ENCODE measurements at regions of chr1 and their contacts with region 1.

Region 1: GRCh38 chr1:47333922-47334764 is 553 bp downstream of the CMPK1 start:
- DNase-seq: peak; percentile 66 to 78 (median 70)
- H3K4me3 ChIP-seq: peak overlapping the region; percentile 86 to 95 (median 93)
- H3K4me3 Mint-ChIP-seq: peak overlapping the region; percentile 95
- H3K27ac ChIP-seq: peak overlapping the region; percentile 93 to 97
- H3K27ac Mint-ChIP-seq: peak overlapping the region in 6 of 7 donors; percentile 96 to 97 (median 96)
- H3K4me1 ChIP-seq: peaks cover 20 to 28% of the 10 kb centered on the region in 2 donors
- H3K4me1 Mint-ChIP-seq: peaks cover 12% of the 10 kb centered on the region
- H3K27me3 ChIP-seq: no peaks in the 10 kb centered on the region
- H3K27me3 Mint-ChIP-seq: no peaks in the 10 kb centered on the region
- CTCF ChIP-seq: no peak

Region 2: DNA sequence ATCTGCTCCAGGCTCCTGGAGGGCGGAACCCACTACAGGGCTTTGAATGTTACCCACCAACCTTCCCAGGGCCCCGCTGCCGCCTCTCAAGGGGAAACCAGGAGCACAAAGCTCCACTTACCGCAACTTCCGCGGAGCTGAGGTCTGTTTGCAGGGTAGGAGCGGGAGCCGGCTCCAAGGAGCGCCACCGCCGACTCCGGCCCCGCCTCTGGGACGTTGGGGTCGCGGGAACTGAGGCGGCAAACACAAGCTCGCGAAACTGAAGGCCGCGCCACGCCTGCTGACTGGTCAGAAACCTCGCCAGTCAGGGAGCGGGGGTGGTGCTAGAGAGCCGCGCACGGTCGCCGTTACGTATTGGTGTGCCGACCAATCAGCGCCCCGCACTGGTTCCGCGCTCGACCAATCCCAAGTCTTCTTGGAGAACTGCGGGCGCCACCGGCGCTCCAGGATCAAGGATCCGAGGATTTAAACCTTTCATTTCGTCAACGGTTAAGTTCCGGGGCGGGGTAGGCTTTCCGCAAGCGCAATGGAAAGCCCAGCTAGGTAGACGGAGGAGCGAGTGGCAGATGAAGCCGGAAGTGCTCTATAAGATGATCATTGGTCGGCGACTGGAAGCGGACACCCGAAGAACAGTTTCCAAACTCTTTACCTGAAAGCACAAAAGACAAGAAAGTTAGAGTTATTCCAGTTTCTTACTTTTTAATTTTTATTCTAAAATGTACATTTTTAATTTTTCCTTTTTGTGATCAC is 20.1 kb before region 1 on chr1 and contains the start of gene STIL:
- intact Hi-C with region 1: loop called in 1 of 2 experiments (anchors 2 kb)
- DNase-seq: peak; percentile 97 to 99 (median 99)
- H3K4me3 ChIP-seq: peak within 1 kb of the TSS; percentile 65 to 100 (median 90)
- H3K4me3 Mint-ChIP-seq: peak within 1 kb of the TSS; percentile 96 to 98
- H3K27ac ChIP-seq: peak within 1 kb of the TSS; percentile 68 to 86
- H3K27ac Mint-ChIP-seq: peak within 1 kb of the TSS; percentile 95 to 98 (median 98)
- H3K4me1 ChIP-seq: peaks cover 11 to 12% of the 10 kb centered on the region in 2 donors
- H3K4me1 Mint-ChIP-seq: peaks cover 11% of the 10 kb centered on the region
- H3K27me3 ChIP-seq: no peaks in the 10 kb centered on the region
- H3K27me3 Mint-ChIP-seq: no peaks in the 10 kb centered on the region
- CTCF ChIP-seq: no peak
- polyA plus RNA-seq, gene STIL: 0.16 to 0.31 (median 0.27) TPM

Region 3: DNA sequence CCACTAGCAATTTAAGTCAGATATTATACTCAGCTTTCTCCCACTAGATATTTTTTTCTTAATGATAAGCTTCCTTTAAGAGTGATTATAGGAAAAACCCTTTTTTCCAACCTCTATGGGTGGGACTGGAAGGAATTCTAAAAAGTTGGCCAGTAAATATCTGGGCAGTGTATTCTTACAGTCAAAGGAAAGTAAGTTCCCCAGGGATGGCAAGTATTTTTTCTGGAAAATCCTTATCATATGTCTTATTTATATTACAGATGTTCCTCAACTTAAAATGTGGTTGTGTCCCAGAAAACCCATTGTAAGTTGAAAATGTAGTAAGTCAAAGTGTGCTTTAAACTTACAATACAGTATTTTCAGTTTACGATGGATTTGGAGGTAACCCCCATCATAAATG is 28.7 kb after region 1 on chr1:
- intact Hi-C with region 1: no loop called
- DNase-seq: no peak
- H3K4me3 ChIP-seq: no peak overlapping the region
- H3K4me3 Mint-ChIP-seq: no peak overlapping the region
- H3K27ac ChIP-seq: no peak overlapping the region
- H3K27ac Mint-ChIP-seq: no peak overlapping the region
- H3K4me1 ChIP-seq: no peaks in the 10 kb centered on the region
- H3K4me1 Mint-ChIP-seq: no peaks in the 10 kb centered on the region
- H3K27me3 ChIP-seq: no peaks in the 10 kb centered on the region
- H3K27me3 Mint-ChIP-seq: no peaks in the 10 kb centered on the region
- CTCF ChIP-seq: no peak

Region 4: GRCh38 chr1:47437447-47438164 is 103.5 kb after region 1 on chr1 and contains the start of gene FOXD2:
- intact Hi-C with region 1: loop called in 1 of 2 experiments (anchors 5 kb)
- DNase-seq: peak; percentile 77 to 81 (median 81)
- H3K4me3 ChIP-seq: peak within 1 kb of the TSS; percentile 55 to 81 (median 77)
- H3K4me3 Mint-ChIP-seq: peak within 1 kb of the TSS; percentile 85 to 93
- H3K27ac ChIP-seq: peak within 1 kb of the TSS in 1 of 2 donors; percentile 42
- H3K27ac Mint-ChIP-seq: peak within 1 kb of the TSS in 4 of 7 donors; percentile 40 to 79 (median 50)
- H3K4me1 ChIP-seq: peaks cover 32 to 55% of the 10 kb centered on the region in 2 donors
- H3K4me1 Mint-ChIP-seq: peaks cover 40% of the 10 kb centered on the region
- H3K27me3 ChIP-seq: peaks cover 72 to 81% of the 10 kb centered on the region in 2 donors
- H3K27me3 Mint-ChIP-seq: peaks cover 46 to 57% (median 46%) of the 10 kb centered on the region in 3 donors
- CTCF ChIP-seq: peak; percentile 100
- polyA plus RNA-seq, gene FOXD2: 0.03 to 0.11 TPM in 2 of 3 donors, not detected in the other

Measured in CD14-positive monocyte (primary cell).